Activated B cell treated with CpG ODN at 0.5 μM for 24 hours (primary cell): ENCODE measurements at regions of chr18 and their contacts with region 1.

Region 1: GRCh38 chr18:5237723-5238370 is 40.8 kb upstream of the AKAIN1 start:
- DNase-seq: peak; percentile 95
- ATAC-seq: peak; percentile 92
- H3K4me3 Mint-ChIP-seq: peak overlapping the region; percentile 96
- H3K27ac Mint-ChIP-seq: peak overlapping the region; percentile 98
- H3K4me1 Mint-ChIP-seq: peaks cover 39% of the 10 kb centered on the region
- H3K27me3 Mint-ChIP-seq: peaks cover 7% of the 10 kb centered on the region
- CTCF ChIP-seq: no peak

Region 2: DNA sequence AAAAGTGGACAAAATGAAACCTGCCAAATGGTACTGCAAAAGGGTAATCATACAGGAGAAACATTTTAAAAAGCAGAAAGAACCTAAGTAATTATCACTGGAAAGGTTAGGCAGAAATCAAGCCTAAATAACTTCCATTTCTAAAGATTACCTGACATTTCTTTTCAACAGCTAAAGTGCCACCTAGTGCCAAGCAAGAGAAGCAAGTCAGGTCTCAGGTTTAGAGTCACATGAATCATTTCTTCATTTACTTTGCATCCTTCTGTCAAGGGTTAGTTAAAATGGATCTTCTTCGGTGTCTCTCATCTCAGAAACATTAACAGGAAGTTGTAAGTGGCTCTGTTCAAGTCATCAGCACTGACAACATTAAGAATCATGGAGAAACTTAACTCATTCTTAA is 131.1 kb before region 1 on chr18:
- CTCF ChIA-PET with region 1: no interaction called
- POLR2A ChIA-PET with region 1: no interaction called
- intact Hi-C with region 1: no loop called
- DNase-seq: no peak
- ATAC-seq: no peak
- H3K4me3 Mint-ChIP-seq: no peak overlapping the region
- H3K27ac Mint-ChIP-seq: no peak overlapping the region
- H3K4me1 Mint-ChIP-seq: no peaks in the 10 kb centered on the region
- H3K27me3 Mint-ChIP-seq: peaks cover 12% of the 10 kb centered on the region
- CTCF ChIP-seq: no peak

Region 3: GRCh38 chr18:5175378-5175777 is 62.5 kb before region 1 on chr18:
- CTCF ChIA-PET with region 1: no interaction called
- POLR2A ChIA-PET with region 1: no interaction called
- intact Hi-C with region 1: loop called (anchors 2 kb)
- DNase-seq: no peak
- ATAC-seq: peak; percentile 89
- H3K4me3 Mint-ChIP-seq: no peak overlapping the region
- H3K27ac Mint-ChIP-seq: peak overlapping the region; percentile 30
- H3K4me1 Mint-ChIP-seq: peaks cover 17% of the 10 kb centered on the region
- H3K27me3 Mint-ChIP-seq: no peaks in the 10 kb centered on the region
- CTCF ChIP-seq: no peak

Region 4: DNA sequence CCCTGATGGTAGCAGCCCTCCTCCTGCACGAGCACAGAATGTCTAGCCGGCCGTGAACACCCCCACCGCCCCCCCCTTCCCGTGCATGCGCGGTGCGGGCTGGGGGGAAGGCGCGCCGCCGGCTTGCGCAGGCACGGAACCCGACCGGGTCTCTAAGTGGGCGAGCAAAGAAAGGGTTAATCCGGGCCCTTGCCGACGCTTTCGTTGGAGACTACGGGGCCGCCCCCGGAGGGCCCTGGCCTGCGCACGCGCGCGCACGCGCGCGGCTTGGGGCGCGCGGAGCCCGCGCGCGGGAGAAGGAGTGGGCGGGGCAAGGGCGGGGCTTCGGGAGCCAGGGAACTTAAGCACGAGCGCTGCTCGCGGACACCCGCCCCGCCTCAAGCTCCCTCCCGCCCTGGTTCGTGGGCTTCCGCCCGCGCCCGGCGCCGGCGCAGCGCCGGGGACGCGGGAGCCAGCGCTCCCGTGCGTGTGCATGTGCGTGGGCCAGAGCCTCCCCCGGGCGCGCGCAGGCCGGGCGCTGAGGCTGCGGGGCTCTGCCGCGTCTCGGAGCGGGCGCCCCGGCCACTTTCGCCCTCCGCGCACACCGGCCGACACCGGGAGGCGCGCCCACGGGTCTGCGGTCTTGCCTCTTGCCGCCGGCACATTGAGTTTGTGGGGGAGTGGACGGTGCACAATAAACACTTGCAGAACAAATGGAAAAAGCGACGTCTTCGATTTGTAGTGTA is 58.3 kb after region 1 on chr18:
- CTCF ChIA-PET with region 1: interaction called, 34 read pairs
- POLR2A ChIA-PET with region 1: interaction called, 195 read pairs
- intact Hi-C with region 1: loop called (anchors 1 kb)
- DNase-seq: peak; percentile 91
- ATAC-seq: peak; percentile 65
- H3K4me3 Mint-ChIP-seq: peak overlapping the region; percentile 95
- H3K27ac Mint-ChIP-seq: peak overlapping the region; percentile 97
- H3K4me1 Mint-ChIP-seq: peaks cover 29% of the 10 kb centered on the region
- H3K27me3 Mint-ChIP-seq: peaks cover 2% of the 10 kb centered on the region
- CTCF ChIP-seq: no peak

Region 5: DNA sequence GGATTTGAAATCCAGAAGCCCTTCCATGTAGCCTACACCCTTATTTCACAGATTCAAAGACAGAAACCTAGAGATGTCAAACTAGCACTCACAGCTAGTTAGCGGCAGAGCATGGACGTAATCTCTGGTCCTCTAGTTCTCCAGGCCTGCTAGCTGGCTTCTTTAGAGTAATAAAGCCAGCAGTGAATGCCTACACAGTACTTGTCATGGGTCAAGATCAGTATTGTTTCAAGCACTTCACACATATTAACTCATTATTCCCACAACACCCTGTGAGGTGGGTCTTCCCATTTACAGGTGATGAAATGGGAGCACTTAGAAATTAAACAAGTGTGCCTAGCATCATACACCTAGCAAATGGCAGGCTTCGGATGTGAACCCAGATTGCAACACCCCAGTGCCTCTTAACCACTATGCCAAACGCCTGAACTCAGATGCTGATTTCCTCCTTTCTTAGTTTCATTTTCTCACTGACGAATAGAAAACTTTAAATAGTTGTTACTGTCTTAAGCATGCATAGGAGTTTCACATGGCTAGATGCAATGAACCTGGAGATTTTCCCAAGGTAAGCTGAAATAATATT is 72.1 kb after region 1 on chr18:
- CTCF ChIA-PET with region 1: interaction called, 5 read pairs
- POLR2A ChIA-PET with region 1: interaction called, 6 read pairs
- intact Hi-C with region 1: loop called (anchors 1 kb)
- DNase-seq: no peak
- ATAC-seq: peak; percentile 95
- H3K4me3 Mint-ChIP-seq: peak overlapping the region; percentile 69
- H3K27ac Mint-ChIP-seq: peak overlapping the region; percentile 85
- H3K4me1 Mint-ChIP-seq: peaks cover 17% of the 10 kb centered on the region
- H3K27me3 Mint-ChIP-seq: no peaks in the 10 kb centered on the region
- CTCF ChIP-seq: no peak

Region 6: DNA sequence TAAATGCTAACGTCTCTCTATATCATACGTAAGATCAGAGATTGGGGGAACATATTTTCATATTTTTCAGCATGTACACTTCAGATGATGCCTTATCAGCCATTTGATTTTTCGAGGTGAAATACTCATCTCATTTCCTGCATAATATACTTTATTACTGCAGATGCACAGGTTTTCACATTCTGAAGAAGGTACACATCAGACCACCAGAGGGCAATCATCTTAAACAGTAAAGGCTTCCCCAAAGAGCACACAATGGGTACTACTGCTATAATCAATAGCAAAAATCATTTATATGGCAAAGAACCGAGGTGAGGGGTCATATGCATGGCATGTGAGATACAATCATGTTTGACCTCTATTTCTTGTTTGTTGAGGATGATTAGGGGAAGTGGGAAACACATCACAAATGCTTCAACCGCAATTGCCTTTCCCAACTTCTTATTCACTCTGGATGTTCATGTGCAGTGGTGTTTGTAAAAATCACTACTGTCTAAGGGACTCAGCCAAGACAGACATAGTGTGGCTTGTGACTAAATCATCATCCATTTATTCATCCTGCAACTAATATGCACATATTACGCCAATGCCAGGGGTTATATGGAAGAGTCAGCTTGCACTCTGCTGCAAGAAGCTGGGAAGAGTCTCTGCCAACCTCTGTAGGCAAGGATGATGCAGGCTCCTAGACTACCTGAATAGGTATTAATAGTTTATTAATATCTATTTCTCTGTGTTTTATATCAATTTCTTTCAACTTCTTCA is 187.2 kb after region 1 on chr18:
- CTCF ChIA-PET with region 1: no interaction called
- POLR2A ChIA-PET with region 1: no interaction called
- intact Hi-C with region 1: loop called (anchors 5 kb)
- DNase-seq: no peak
- ATAC-seq: no peak
- H3K4me3 Mint-ChIP-seq: no peak overlapping the region
- H3K27ac Mint-ChIP-seq: no peak overlapping the region
- H3K4me1 Mint-ChIP-seq: no peaks in the 10 kb centered on the region
- H3K27me3 Mint-ChIP-seq: peaks cover 3% of the 10 kb centered on the region
- CTCF ChIP-seq: no peak

Region 7: GRCh38 chr18:5439986-5440696 is 202.3 kb after region 1 on chr18:
- CTCF ChIA-PET with region 1: no interaction called
- POLR2A ChIA-PET with region 1: no interaction called
- intact Hi-C with region 1: loop called (anchors 2 kb)
- DNase-seq: no peak
- ATAC-seq: peak; percentile 42
- H3K4me3 Mint-ChIP-seq: no peak overlapping the region
- H3K27ac Mint-ChIP-seq: no peak overlapping the region
- H3K4me1 Mint-ChIP-seq: peaks cover 12% of the 10 kb centered on the region
- H3K27me3 Mint-ChIP-seq: no peaks in the 10 kb centered on the region
- CTCF ChIP-seq: no peak

Region 8: DNA sequence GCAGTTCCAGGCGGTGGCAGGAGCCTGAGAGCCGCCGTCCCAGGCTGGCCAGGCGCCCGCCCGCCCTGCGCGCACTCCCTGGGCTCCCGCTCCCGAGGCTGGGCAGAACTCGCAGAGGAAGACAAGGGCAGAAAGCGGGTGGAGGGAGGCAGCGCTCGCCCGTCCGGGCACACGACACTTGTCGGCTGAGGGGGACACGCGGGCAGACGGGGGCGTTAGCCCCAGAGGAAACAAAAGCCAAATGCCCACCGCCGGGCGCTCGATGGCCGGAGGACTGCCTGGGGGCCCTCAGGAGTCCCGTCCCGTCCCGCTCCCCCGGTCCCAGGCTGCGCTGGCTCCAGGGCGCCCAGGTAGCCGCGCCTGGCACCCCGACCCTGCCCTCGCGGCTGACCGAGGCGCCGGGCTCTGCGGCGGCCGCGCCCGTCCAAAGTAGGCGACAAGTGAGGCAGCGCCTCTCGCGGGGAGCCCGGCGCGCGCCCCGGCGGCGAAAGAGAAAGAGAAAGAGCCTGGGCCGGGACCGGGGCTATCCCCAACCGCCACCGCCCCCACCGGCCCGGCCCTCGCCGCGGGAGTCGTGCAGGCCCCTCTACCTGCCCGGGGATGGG is 1176.4 kb after region 1 on chr18:
- CTCF ChIA-PET with region 1: no interaction called
- POLR2A ChIA-PET with region 1: no interaction called
- intact Hi-C with region 1: loop called (anchors 10 kb)
- DNase-seq: peak; percentile 63
- ATAC-seq: peak; percentile 83
- H3K4me3 Mint-ChIP-seq: peak overlapping the region; percentile 75
- H3K27ac Mint-ChIP-seq: no peak overlapping the region
- H3K4me1 Mint-ChIP-seq: peaks cover 30% of the 10 kb centered on the region
- H3K27me3 Mint-ChIP-seq: peaks cover 8% of the 10 kb centered on the region
- CTCF ChIP-seq: no peak